ENCODE measurements at regions of chr1 and their contacts with region 1.

Region 1: DNA sequence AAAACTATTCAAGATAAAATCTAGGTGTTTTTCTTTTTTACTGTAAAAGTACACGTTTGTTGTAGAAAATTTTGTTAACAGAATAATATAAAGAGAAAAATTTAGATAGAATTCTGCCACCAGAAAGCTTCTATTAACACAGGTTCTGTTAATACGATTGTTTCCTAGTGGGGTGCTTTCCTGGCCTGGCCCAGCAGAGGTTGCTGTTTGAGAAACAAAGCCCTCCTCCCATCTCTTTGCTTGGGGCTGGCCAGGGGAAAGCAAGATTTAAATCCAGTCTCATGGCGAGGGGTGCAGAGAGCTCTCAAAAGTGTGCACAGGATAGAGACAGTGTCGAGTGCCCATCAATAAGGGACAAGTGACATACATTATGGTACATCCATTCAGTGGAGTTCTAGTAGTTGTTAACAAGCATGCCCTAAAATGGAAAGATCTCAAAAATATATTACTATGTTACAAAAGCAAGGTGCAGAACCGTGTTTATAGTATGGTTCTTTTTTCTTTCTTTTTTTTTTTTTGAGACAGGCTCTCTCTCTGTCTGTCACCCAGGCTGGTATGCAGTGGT is 14.6 kb upstream of the ACBD3 start:
- DNase-seq: peak; percentile 55
- H3K4me3 ChIP-seq: no peak overlapping the region
- H3K27ac ChIP-seq: no peak overlapping the region
- H3K4me1 ChIP-seq: no peaks in the 10 kb centered on the region
- H3K27me3 ChIP-seq: no peaks in the 10 kb centered on the region
- CTCF ChIP-seq: peak; percentile 69

Region 2: GRCh38 chr1:225977937-225978748 is 223.0 kb before region 1 on chr1:
- CTCF ChIA-PET with region 1: no interaction called
- POLR2A ChIA-PET with region 1: no interaction called
- intact Hi-C with region 1: no loop called
- DNase-seq: no peak
- H3K4me3 ChIP-seq: no peak overlapping the region
- H3K27ac ChIP-seq: no peak overlapping the region
- H3K4me1 ChIP-seq: no peaks in the 10 kb centered on the region
- H3K27me3 ChIP-seq: no peaks in the 10 kb centered on the region
- CTCF ChIP-seq: no peak

Region 3: GRCh38 chr1:226332947-226333346 is 131.8 kb after region 1 on chr1:
- CTCF ChIA-PET with region 1: interaction called, 7 read pairs
- POLR2A ChIA-PET with region 1: no interaction called
- intact Hi-C with region 1: loop called (anchors 2 kb)
- DNase-seq: no peak
- H3K4me3 ChIP-seq: no peak overlapping the region
- H3K27ac ChIP-seq: no peak overlapping the region
- H3K4me1 ChIP-seq: no peaks in the 10 kb centered on the region
- H3K27me3 ChIP-seq: no peaks in the 10 kb centered on the region
- CTCF ChIP-seq: no peak

Measured in A673 (cell line).